SK-N-SH (cell line): ENCODE measurements at regions of chr11 and their contacts with region 1.

Region 1: GRCh38 chr11:128831174-128832120 is 35.6 kb downstream of the KCNJ1 start:
- DNase-seq: peak; percentile 79
- H3K4me3 ChIP-seq: peak overlapping the region in 1 of 2 experiments; percentile 34; a peak in 1 of 4 replicates
- H3K27ac ChIP-seq: peak overlapping the region in 1 of 2 experiments; percentile 27; a peak in 1 of 4 replicates
- H3K4me1 ChIP-seq: peaks cover 0 to 6% of the 10 kb centered on the region in 2 experiments; a peak in 1 of 4 replicates
- H3K27me3 ChIP-seq: no peaks in the 10 kb centered on the region
- CTCF ChIP-seq: peak; percentile 90
- EP300 ChIP-seq: no peak
- RAD21 ChIP-seq: peak; percentile 93

Region 2: GRCh38 chr11:128172046-128172878 is 659.2 kb before region 1 on chr11:
- CTCF ChIA-PET with region 1: interaction called, 123 read pairs
- POLR2A ChIA-PET with region 1: no interaction called
- DNase-seq: peak; percentile 73
- H3K4me3 ChIP-seq: no peak overlapping the region; a peak in 1 of 4 replicates
- H3K27ac ChIP-seq: peak overlapping the region in 1 of 2 experiments; percentile 50; a peak in 2 of 4 replicates
- H3K4me1 ChIP-seq: peaks cover 3 to 5% of the 10 kb centered on the region in 2 experiments; a peak in 2 of 4 replicates
- H3K27me3 ChIP-seq: no peaks in the 10 kb centered on the region
- CTCF ChIP-seq: peak; percentile 87
- EP300 ChIP-seq: no peak
- RAD21 ChIP-seq: peak; percentile 98

Region 3: DNA sequence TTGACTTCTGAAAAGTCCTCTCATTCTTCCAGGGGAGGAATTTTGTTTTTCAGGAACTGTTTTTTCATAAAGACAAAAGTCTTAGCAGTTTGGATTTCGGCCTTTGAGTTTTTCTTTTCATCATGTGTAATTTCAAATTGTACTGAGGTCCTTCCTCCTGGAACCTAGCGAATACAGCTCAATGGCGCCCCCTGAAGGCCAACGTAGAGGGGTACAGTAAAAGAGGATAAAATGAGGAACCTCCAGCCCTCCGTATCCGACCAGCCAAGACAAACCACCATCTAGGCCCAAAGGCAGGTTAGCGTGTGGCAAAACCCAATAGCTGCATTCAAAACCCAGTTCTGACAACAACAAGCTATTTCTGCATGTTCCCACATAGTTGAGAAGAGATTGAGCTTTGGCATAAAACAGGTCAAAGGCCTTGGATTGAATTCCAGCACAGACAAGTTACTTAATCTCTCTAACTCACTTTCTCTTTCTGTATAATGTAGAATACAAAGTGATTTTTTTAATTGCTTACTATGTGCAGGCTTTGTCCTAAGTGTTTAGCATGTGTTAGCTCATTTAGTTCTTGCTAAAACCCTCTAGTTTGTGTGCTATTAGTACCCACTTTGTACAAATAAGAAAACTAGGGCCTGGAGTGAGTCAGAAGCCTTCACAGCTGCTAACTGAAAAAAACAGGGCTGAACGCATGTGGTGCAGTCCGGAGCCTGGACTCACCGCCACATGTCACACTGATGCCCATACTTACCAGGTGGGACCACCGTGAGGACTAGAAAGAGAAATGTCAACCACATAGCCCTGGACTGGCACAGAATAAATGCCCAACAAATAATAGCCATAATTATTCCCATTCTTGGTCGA is 200.8 kb before region 1 on chr11:
- CTCF ChIA-PET with region 1: interaction called, 63 read pairs
- POLR2A ChIA-PET with region 1: no interaction called
- DNase-seq: peak; percentile 83
- H3K4me3 ChIP-seq: peak overlapping the region in 1 of 2 experiments; percentile 50; a peak in 1 of 4 replicates
- H3K27ac ChIP-seq: peak overlapping the region; percentile 27 to 50; a peak in 2 of 4 replicates
- H3K4me1 ChIP-seq: peaks cover 0 to 14% of the 10 kb centered on the region in 2 experiments; a peak in 2 of 4 replicates
- H3K27me3 ChIP-seq: no peaks in the 10 kb centered on the region
- CTCF ChIP-seq: peak; percentile 97
- EP300 ChIP-seq: no peak
- RAD21 ChIP-seq: peak; percentile 98

Region 4: DNA sequence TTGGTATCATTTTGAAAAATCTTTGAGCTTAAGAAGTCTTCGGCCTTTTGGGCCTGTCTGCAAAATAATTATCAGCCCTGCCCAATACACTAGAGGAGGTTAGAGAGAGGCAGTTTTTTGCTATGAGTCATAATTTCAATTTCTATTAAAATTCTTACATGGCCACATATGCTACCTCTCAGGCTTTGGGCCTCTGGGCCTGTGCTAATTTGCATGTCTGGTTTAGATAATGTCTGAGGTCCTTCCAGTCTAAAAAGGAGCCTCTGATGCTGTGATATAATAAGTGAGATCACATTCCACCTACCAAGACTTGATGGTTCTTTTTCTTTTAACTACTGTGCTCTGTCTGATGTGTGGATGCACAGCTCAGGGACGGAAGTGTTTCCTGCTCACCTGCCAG is 35.2 kb before region 1 on chr11:
- CTCF ChIA-PET with region 1: interaction called, 21 read pairs
- POLR2A ChIA-PET with region 1: no interaction called
- DNase-seq: no peak
- H3K4me3 ChIP-seq: no peak overlapping the region
- H3K27ac ChIP-seq: peak overlapping the region in 1 of 2 experiments; percentile 11; a peak in 1 of 4 replicates
- H3K4me1 ChIP-seq: peaks cover 0 to under 1% of the 10 kb centered on the region in 2 experiments; a peak in 1 of 4 replicates
- H3K27me3 ChIP-seq: no peaks in the 10 kb centered on the region
- CTCF ChIP-seq: no peak
- EP300 ChIP-seq: no peak
- RAD21 ChIP-seq: no peak

Region 5: GRCh38 chr11:128852327-128853023 is 21.0 kb after region 1 on chr11:
- CTCF ChIA-PET with region 1: interaction called, 14 read pairs
- POLR2A ChIA-PET with region 1: no interaction called
- DNase-seq: no peak
- H3K4me3 ChIP-seq: no peak overlapping the region
- H3K27ac ChIP-seq: no peak overlapping the region
- H3K4me1 ChIP-seq: no peaks in the 10 kb centered on the region
- H3K27me3 ChIP-seq: no peaks in the 10 kb centered on the region
- CTCF ChIP-seq: no peak
- EP300 ChIP-seq: no peak
- RAD21 ChIP-seq: no peak

Region 6: GRCh38 chr11:128884703-128885338 is 53.4 kb after region 1 on chr11:
- CTCF ChIA-PET with region 1: no interaction called
- POLR2A ChIA-PET with region 1: no interaction called
- DNase-seq: peak; percentile 77
- H3K4me3 ChIP-seq: peak overlapping the region in 1 of 2 experiments; percentile 20; a peak in 1 of 4 replicates
- H3K27ac ChIP-seq: no peak overlapping the region
- H3K4me1 ChIP-seq: no peaks in the 10 kb centered on the region; a peak in 1 of 4 replicates
- H3K27me3 ChIP-seq: peaks cover 11% of the 10 kb centered on the region; the same call in 1 of the 2 replicates
- CTCF ChIP-seq: peak; percentile 94
- EP300 ChIP-seq: no peak
- RAD21 ChIP-seq: peak; percentile 96

Region 7: DNA sequence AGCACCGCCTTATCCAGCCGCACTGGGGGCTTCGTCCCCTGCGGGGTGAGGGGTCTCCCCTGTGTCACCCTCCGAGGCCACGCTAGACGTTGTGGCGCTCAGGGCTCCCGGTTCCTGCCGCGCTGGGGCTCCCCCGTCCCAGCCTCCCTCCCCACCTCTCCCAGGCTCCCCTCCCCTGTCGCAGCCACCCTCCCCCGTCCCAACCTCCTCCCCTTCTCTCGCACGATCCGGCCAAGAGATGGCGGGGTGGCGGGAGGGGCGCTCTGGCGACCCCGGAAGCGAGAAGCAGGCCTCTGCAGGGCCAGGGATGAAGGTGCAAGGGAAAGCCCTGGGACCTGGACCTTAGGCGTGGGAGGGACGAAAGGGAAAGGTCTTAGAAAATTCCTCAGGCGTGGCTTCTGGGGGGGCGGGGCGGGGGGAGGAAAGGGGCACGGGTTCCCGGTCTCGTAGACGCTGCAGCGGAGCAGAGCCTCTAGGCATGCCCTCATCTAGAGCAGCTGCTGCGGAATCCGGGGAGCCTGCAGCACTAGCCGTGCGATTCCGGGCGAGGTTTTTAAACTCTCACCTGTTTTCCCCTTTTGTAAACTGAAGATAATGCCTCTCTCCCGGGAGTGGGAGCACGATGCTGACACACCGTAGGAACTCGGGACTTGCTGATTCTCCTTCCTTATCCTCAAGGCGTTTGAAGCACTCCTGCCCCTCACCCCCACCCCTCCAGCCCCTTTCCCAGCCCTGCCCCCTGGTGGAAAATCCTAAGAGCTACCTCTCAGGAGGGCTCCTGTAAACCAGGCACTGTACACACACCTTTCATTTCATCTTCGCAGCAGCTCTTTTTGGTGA is 74.1 kb after region 1 on chr11:
- CTCF ChIA-PET with region 1: no interaction called
- POLR2A ChIA-PET with region 1: no interaction called
- DNase-seq: peak; percentile 86
- H3K4me3 ChIP-seq: peak overlapping the region; percentile 46 to 53
- H3K27ac ChIP-seq: no peak overlapping the region; a peak in 1 of 4 replicates
- H3K4me1 ChIP-seq: peaks cover 16 to 26% of the 10 kb centered on the region in 2 experiments; a peak in 3 of 4 replicates
- H3K27me3 ChIP-seq: no peaks in the 10 kb centered on the region
- CTCF ChIP-seq: peak; percentile 54
- EP300 ChIP-seq: no peak
- RAD21 ChIP-seq: no peak